ENCODE measurements at regions of chr5 and their contacts with region 1.

Region 1: DNA sequence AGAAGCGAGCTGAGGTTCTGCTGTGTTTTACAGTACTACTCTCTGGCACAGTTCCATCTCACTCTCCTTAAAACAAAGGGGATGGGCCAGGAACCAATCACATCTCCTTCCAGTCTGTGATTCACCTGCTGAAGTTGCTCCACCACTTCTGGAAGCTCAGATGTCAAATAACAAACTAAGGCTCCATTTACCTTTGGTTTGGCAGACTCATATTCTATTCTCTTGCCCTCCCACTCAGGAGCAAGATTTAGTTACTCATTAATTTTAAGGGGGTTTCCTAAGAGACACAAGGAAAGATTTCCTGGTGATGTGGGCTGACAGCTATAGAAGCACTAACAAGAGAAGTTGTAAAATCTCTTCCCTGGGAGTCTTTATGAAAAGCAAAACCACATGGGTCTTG is 37.8 kb upstream of the KIF2A start:
- DNase-seq: peak; percentile 77
- H3K4me3 Mint-ChIP-seq: peak overlapping the region; percentile 55
- H3K27ac Mint-ChIP-seq: peak overlapping the region; percentile 92
- H3K4me1 Mint-ChIP-seq: peaks cover 71% of the 10 kb centered on the region
- H3K27me3 Mint-ChIP-seq: no peaks in the 10 kb centered on the region
- CTCF ChIP-seq: no peak

Region 2: DNA sequence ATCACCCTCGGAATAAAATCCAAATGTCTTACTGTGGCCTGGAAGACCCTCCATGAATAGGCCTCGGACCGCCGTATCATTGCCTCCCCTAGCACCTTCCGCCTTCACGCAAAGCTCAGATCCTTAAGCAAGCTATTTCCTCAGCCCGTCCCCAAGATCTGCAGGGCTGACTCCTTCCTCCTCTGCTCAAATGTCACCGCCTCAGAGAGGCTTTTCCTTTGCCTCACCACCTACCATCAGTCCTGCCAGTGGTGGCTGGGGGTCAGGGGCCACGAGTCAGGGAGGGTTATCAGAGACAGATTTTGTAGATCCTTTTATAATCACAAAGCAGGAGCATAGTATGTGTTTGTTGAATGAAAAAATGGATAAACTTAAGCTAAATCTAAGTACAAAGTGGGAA is 36.7 kb before region 1 on chr5:
- CTCF ChIA-PET with region 1: no interaction called
- intact Hi-C with region 1: loop called (anchors 5 kb)
- DNase-seq: no peak
- H3K4me3 Mint-ChIP-seq: no peak overlapping the region
- H3K27ac Mint-ChIP-seq: peak overlapping the region; percentile 57
- H3K4me1 Mint-ChIP-seq: peaks cover 27% of the 10 kb centered on the region
- H3K27me3 Mint-ChIP-seq: no peaks in the 10 kb centered on the region
- CTCF ChIP-seq: no peak

Region 3: DNA sequence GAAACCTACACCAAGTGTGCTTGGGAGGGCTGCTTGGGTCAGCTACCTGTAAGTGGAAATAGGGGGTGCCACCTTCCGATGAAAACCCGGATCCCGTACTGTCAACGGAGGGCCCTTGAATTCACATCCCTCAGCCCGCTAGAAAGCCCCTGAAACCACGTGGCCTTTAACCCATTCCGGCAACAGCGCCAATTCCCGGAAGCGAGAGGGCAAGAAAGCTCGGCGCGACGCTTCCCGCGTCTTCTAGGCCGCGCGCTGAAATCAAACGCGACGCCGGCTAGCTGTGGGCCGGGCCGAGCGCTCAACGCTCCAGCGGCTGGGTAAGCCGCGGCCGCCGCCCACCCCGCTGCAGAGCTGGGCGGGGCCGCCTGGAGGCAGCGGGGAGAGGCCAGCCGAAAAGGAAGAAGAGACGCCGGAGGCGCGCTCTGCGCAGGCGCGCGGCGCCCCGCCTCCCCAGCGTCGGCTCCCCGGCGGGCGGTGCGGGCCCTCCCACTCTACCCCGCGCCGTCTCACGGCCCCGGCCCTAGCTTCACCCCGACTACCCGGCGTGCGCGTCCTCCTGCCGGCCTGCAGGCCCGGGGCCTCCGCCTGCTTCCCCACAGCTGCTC is 37.6 kb after region 1 on chr5 and contains the start of gene KIF2A:
- CTCF ChIA-PET with region 1: interaction called, 4 read pairs
- intact Hi-C with region 1: loop called (anchors 5 kb)
- DNase-seq: peak; percentile 93
- H3K4me3 Mint-ChIP-seq: peak within 1 kb of the TSS; percentile 87
- H3K27ac Mint-ChIP-seq: peak within 1 kb of the TSS; percentile 66
- H3K4me1 Mint-ChIP-seq: peaks cover 22% of the 10 kb centered on the region
- H3K27me3 Mint-ChIP-seq: no peaks in the 10 kb centered on the region
- CTCF ChIP-seq: no peak
- total RNA-seq, gene KIF2A: 76.9 and 81.4 TPM in 2 replicates

Region 4: GRCh38 chr5:62689599-62690368 is 421.6 kb after region 1 on chr5:
- CTCF ChIA-PET with region 1: no interaction called
- intact Hi-C with region 1: no loop called
- DNase-seq: no peak
- H3K4me3 Mint-ChIP-seq: no peak overlapping the region
- H3K27ac Mint-ChIP-seq: no peak overlapping the region
- H3K4me1 Mint-ChIP-seq: no peaks in the 10 kb centered on the region
- H3K27me3 Mint-ChIP-seq: no peaks in the 10 kb centered on the region
- CTCF ChIP-seq: no peak

Measured in Calu3 (cell line).